Heart left ventricle (tissue), 16 donors: ENCODE measurements at regions of chr2 and their contacts with region 1.

Region 1: GRCh38 chr2:44244129-44244871 is 31.0 kb upstream of the SLC3A1 start:
- DNase-seq: peak; percentile 47 to 65 (median 53)
- ATAC-seq: peak in 3 of 4 donors; percentile 64 to 82 (median 71)
- H3K4me3 ChIP-seq: peak overlapping the region in 10 of 12 donors; percentile 17 to 54 (median 40)
- H3K27ac ChIP-seq: no peak overlapping the region
- H3K4me1 ChIP-seq: peaks cover 0 to 12% (median 1%) of the 10 kb centered on the region in 12 donors
- H3K27me3 ChIP-seq: no peaks in the 10 kb centered on the region
- CTCF ChIP-seq: peak; percentile 56 to 77 (median 66)
- POLR2A ChIP-seq: no peak

Region 2: GRCh38 chr2:44167940-44168680 is 76.2 kb before region 1 on chr2:
- intact Hi-C with region 1: loop called in 1 of 10 experiments (anchors 5 kb)
- DNase-seq: peak; percentile 96 to 100 (median 99)
- ATAC-seq: peak; percentile 93 to 95 (median 94)
- H3K4me3 ChIP-seq: peak overlapping the region; percentile 18 to 87 (median 58)
- H3K27ac ChIP-seq: peak overlapping the region; percentile 90 to 98 (median 94)
- H3K4me1 ChIP-seq: peaks cover 0 to 34% (median 20%) of the 10 kb centered on the region in 12 donors
- H3K27me3 ChIP-seq: no peaks in the 10 kb centered on the region
- CTCF ChIP-seq: no peak
- POLR2A ChIP-seq: peak in 1 of 2 donors; percentile 47

Region 3: DNA sequence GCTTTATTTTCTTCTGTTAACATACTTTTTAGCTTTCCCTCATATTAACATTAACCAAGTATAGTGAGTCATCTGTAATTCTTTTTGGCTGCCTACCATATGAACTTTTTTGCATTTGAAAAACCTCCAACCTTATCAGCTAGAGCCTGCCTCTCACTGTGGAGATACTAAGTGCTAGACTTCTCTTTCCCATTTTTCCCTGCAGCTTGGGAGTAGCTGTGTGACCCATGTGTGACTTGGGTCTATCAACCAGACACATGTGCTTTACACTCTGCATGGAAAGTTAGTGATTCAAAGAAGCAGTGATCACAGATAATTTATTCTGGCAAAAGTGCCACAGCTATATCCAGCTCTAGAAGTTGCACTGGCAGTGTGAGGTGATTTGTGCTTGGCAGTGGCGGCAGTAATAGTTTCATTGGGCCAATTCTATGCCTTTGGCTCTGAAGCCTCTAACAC is 80.7 kb after region 1 on chr2:
- intact Hi-C with region 1: loop called in 2 of 10 experiments (anchors 10 kb)
- DNase-seq: peak in 4 of 5 donors; percentile 20 to 41 (median 35)
- ATAC-seq: peak; percentile 90 to 93 (median 90)
- H3K4me3 ChIP-seq: no peak overlapping the region
- H3K27ac ChIP-seq: peak overlapping the region in 10 of 12 donors; percentile 9 to 77 (median 56)
- H3K4me1 ChIP-seq: peaks cover 0 to 18% (median 8%) of the 10 kb centered on the region in 12 donors
- H3K27me3 ChIP-seq: no peaks in the 10 kb centered on the region
- CTCF ChIP-seq: no peak
- POLR2A ChIP-seq: no peak

Region 4: DNA sequence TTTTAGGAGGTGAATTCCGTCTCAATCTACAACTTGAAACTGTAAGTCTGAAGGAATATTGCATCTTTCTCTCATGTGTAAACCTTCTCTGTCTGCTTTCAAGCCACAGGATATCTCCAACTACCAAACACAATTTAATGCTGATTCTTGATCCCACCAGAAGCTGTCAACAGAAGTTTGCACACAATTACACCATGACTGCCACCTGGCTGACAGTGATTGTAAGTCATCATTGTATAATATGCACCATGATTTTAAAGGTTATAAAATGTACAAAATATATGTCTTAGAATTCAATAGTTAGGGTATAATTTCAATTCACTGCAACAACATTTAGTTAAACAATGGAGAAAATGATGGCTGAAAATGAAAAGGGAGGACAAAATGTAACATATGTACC is 98.6 kb after region 1 on chr2:
- intact Hi-C with region 1: loop called in 3 of 10 experiments (anchors 10 kb)
- DNase-seq: no peak
- ATAC-seq: no peak
- H3K4me3 ChIP-seq: no peak overlapping the region
- H3K27ac ChIP-seq: no peak overlapping the region
- H3K4me1 ChIP-seq: peaks cover 0 to 15% (median 4%) of the 10 kb centered on the region in 12 donors
- H3K27me3 ChIP-seq: no peaks in the 10 kb centered on the region
- CTCF ChIP-seq: peak in 9 of 12 donors; percentile 10 to 50 (median 37)
- POLR2A ChIP-seq: no peak

Region 5: DNA sequence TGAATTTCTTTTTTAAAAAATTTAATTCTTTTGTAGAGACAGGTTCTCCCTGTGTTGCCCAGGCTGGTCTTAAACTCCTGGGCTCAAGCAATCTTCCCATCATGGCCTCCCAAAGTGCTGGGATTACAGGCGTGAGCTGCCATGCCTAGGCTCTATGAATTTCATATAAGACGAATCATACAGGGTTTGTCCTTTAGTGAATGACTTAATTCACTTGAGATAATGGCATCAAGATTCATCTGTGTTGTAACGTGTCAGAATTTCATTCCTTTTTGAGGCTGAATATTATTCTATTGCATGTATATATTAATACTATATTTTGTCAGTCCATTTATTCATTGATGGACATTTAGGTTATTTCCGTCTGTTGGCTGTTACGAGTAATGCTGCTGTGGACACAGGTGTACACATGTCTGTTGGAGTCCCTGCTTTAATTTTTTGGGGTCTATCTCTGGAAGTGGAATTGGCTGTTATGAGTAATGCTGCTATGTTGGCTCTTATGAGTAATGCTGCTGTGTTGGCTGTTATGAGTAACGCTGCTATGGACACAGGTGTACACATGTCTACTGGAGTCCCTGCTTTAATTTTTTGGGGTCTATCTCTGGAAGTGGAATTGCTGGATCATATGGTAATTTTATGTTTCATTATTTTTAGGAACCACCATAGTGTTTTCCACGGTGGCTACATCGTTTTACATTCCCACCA is 328.0 kb after region 1 on chr2:
- intact Hi-C with region 1: no loop called
- DNase-seq: no peak
- ATAC-seq: peak in 3 of 4 donors; percentile 49 to 56 (median 55)
- H3K4me3 ChIP-seq: no peak overlapping the region
- H3K27ac ChIP-seq: no peak overlapping the region
- H3K4me1 ChIP-seq: no peaks in the 10 kb centered on the region
- H3K27me3 ChIP-seq: no peaks in the 10 kb centered on the region
- CTCF ChIP-seq: no peak
- POLR2A ChIP-seq: no peak

Region 6: DNA sequence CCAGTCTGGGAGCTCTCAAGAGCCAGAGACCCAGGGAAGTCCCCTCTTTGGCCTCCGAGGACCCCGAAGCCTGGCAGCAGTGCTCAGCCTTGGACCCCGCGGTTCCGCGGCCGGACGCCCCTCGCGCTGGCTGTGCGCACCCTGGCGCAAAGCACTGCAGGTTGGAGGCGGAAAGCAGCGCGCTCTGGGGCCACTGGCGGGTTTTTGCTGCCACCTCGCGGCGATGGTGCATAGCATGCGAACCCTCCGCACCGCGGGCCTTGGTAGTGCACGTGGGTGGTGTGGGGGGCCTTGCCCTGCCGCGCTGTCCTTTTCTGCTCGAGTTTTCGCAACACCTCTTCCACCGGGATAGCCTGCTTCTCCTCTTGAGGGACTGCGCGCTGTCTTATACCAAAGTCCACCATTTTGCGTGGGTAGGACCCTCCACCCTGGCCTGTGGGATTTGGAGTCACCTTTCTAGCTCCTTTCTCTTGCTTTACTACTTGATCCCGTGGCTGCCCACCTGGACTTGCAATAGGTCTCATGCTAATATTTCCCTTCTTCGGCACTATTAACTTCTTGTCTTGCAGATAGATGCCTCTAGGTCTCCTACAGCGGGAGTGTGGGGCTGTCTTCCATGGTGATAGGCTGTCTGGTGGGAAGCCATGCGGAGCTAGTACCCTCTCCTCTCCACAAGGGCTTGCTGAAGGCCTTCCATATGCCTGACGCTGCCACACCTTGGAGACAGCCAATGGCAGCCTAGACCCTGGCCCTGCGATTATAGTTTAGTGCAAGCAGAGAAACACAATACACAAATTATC is 711.5 kb after region 1 on chr2:
- intact Hi-C with region 1: loop called in 5 of 10 experiments (anchors 2 to 10 kb)
- DNase-seq: peak; percentile 63 to 88 (median 72)
- ATAC-seq: peak; percentile 74 to 88 (median 82)
- H3K4me3 ChIP-seq: peak overlapping the region; percentile 0 to 47 (median 31)
- H3K27ac ChIP-seq: no peak overlapping the region
- H3K4me1 ChIP-seq: peaks cover 0 to 35% (median 28%) of the 10 kb centered on the region in 12 donors
- H3K27me3 ChIP-seq: peaks cover 27 to 86% (median 59%) of the 10 kb centered on the region in 9 donors
- CTCF ChIP-seq: peak; percentile 76 to 94 (median 88)
- POLR2A ChIP-seq: no peak